Esophagus muscularis mucosa (tissue), 4 donors: ENCODE measurements at regions of chr7 and their contacts with region 1.

Region 1: DNA sequence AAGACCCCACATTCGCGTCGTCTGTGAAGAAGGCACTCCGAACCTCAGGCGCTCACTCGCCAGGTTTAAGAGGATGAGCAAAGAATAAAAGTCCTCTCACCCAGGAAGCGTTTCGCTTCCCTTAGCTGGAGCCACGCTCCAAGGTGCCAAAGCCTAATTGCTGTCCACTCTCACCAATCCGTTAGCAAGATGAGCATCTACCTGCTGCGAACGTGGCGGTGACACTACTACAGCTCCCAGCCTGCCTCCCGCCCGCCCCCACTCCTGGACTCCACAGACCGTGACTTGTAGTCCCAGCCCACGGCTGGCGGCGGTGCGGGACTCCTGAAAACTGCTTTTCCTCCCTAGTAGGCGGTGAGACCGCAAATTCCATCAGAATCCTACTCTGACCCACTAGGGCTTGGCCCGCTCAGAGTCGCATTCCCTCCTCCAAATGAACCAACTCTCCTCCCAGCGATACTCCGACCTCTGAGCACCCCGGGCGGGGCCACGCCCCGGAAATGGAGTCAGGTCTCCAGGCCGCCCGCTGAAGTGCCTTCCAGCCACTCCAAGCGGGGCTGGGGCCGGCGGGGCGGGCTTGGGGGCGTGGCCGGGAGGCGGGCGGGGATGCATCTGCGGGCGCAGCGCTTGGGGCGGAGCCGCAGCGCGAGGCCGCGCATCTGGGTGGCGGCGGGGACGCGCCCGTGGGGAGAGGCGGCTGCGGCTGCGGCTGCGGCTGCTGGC is 521 bp upstream of the PTPN12 start:
- DNase-seq: peak; percentile 99
- H3K4me3 ChIP-seq: peak overlapping the region; percentile 89 to 100 (median 100)
- H3K27ac ChIP-seq: peak overlapping the region; percentile 95 to 100 (median 98)
- H3K4me1 ChIP-seq: peaks cover 24 to 36% (median 35%) of the 10 kb centered on the region in 4 donors
- H3K27me3 ChIP-seq: no peaks in the 10 kb centered on the region
- CTCF ChIP-seq: no peak
- EP300 ChIP-seq: no peak
- POLR2A ChIP-seq: peak; percentile 78

Region 2: GRCh38 chr7:77442636-77443035 is 93.9 kb before region 1 on chr7:
- intact Hi-C with region 1: loop called (anchors 10 kb)
- DNase-seq: no peak
- H3K4me3 ChIP-seq: no peak overlapping the region
- H3K27ac ChIP-seq: no peak overlapping the region
- H3K4me1 ChIP-seq: peaks cover 0 to 6% (median 2%) of the 10 kb centered on the region in 4 donors
- H3K27me3 ChIP-seq: no peaks in the 10 kb centered on the region
- CTCF ChIP-seq: no peak
- EP300 ChIP-seq: no peak
- POLR2A ChIP-seq: no peak

Region 3: DNA sequence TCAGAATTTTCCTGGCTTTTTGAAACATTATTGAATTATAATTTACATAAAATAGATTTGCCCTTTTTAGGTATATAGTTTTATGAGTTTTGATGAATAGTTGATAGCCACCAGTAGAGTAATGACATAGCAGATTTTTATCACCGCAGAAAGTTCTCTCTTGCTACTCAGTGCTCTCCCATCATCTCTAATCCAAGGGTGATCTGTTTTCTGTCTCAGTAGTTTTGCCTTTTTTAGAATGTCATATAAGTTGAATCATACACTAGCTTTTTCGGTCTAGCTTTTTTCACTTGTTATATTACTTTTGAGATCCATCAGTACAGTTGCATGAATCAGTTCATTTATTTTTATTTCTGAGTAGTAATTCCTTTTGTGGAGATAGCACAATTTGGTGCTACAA is 177.6 kb after region 1 on chr7:
- intact Hi-C with region 1: no loop called
- DNase-seq: no peak
- H3K4me3 ChIP-seq: no peak overlapping the region
- H3K27ac ChIP-seq: no peak overlapping the region
- H3K4me1 ChIP-seq: peaks cover 3 to 65% (median 52%) of the 10 kb centered on the region in 4 donors
- H3K27me3 ChIP-seq: no peaks in the 10 kb centered on the region
- CTCF ChIP-seq: no peak
- EP300 ChIP-seq: no peak
- POLR2A ChIP-seq: no peak

Region 4: GRCh38 chr7:77798394-77799077 is 262.0 kb after region 1 on chr7 and contains the starts of genes PHTF2 and TMEM60:
- intact Hi-C with region 1: loop called (anchors 10 kb)
- DNase-seq: peak; percentile 99
- H3K4me3 ChIP-seq: peak within 1 kb of the TSS; percentile 86 to 99 (median 94)
- H3K27ac ChIP-seq: peak within 1 kb of the TSS; percentile 86 to 94 (median 91)
- H3K4me1 ChIP-seq: peaks cover 37 to 48% (median 42%) of the 10 kb centered on the region in 4 donors
- H3K27me3 ChIP-seq: no peaks in the 10 kb centered on the region
- CTCF ChIP-seq: peak; percentile 38 to 58 (median 54)
- EP300 ChIP-seq: no peak
- POLR2A ChIP-seq: peak; percentile 68
- total RNA-seq, gene PHTF2: 14.2 to 26.2 (median 17.2) TPM
- total RNA-seq, gene TMEM60: 9.6 to 15.9 (median 12.7) TPM